HEK293T (cell line): ENCODE measurements at regions of chr3 and their contacts with region 1.

Region 1: DNA sequence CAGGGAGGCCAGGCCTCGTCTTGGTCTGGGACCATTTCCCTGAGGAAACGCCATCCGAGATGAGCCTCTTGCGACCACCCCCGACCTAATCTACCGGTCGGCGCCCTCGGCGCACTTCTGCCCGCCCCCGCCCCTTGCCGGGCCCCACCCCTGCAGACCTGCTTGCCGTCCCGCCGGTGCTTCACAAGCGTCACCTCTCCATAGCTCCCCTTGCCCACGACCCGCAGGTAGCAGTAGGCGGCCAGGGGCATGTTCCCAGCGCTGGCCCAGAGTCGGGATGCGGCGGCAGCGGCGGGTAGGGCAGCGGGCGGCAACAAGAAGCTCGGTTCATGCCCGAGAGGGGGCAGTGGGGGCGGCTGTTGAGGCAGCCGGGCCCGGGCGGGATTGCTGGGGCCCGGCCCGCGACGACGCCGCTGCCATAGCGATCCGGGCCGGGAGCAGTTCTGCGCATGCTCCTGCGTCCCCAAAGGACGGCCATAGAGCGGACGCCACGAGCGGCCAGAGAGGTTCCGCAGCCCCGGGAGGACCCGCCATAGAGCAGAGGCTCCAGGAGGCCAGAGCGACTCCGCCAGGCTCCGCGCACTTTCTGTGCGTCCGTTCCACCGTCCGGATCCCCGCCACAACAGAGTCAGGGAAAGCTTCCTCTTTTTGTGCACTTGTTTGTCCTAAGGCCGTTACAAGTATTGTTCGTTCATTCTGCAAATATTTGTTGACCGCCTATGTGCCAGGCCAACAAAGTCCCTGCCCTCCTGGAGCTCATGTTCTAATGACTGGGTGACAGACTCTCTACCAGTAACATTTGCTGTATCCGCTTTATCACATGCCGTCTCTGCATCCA is at the start of gene NEK4:
- DNase-seq: peak; percentile 97

Region 2: DNA sequence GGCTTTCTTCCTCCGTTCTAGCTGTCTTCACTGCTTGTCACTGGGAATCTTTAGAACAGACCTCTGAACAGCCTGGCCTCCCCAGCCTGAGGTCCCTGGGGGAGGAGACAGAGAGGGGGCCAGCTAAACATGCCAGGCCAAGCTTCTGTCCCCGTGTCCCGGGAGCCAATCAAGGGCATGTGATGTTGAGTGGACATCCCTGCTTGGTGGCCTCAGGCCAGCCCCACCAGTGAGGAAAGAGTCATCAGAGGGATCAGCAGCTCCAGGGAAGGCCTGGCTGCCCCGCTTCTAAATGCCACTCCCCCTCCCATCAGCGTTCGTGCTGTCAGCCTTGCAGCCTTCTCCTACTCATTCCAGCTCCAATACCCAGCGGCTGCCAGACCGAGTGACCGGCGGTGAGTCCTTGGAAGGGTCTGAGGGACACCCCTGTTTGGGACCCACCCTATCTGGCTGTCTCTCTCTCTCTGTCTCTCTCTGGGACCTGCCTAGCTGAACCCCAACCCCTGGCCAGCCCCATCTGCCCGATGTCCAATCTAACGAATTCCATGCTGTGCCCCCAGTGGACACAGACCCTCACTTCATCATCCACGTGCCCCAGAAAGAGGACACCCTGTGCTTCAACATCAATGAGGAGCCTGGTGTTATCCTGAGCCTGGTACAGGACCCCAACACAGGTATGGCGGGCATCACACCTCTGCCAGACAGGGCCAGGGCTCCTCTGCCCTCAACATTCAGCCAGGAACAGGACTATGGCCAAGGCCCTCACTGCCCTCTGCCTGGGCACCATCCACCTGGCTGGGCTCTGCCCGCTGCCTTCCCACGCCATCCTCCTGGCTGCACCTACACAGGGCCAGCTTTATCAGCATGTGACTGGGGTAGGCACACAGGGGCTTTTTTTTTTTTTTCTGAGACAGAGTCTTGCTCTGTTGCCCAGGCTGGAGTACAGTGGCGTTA is 17.2 kb after region 1 on chr3:
- CTCF ChIA-PET with region 1: interaction called, 4 read pairs
- POLR2A ChIA-PET with region 1: interaction called, 35 read pairs
- DNase-seq: no peak

Region 3: DNA sequence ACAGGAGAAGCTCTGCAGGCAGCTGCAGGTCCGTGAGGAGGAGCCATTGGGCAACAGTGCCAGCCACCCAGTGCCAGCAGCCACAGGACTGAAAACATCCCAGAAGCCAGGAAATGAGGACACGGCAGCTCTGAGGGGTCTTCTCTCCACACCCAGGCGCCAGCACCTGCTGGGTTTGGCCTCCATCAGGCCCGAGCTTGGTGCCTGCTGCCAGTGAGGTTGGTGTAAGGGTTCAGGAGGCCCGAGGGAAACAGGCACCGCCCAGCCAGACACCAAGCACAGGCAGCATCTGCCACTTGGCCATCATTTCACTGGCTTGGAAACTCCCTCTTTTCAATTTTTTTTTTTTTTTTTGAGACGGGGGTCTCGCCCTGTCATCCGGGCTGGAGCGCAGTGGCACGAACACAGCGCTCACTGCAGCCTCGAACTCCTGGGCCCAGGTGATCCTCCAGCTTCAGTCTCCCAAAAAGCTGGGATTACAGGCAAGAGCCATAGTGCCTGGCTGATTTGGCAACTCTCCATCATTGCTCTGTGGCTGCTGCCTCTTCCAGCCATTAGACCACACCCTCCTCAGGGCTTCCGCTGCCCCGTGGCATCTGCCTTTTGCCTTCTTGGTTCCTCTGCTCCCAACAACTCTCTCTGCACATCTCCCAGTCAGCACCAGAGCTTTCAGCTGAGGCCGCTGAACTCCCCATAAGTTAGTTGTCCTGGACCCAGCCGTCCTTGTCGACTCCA is 22.4 kb after region 1 on chr3:
- CTCF ChIA-PET with region 1: interaction called, 4 read pairs
- POLR2A ChIA-PET with region 1: interaction called, 17 read pairs
- DNase-seq: no peak

Region 4: GRCh38 chr3:52798978-52799476 is 28.3 kb after region 1 on chr3:
- CTCF ChIA-PET with region 1: no interaction called
- POLR2A ChIA-PET with region 1: interaction called, 12 read pairs
- DNase-seq: peak; percentile 80

Region 5: DNA sequence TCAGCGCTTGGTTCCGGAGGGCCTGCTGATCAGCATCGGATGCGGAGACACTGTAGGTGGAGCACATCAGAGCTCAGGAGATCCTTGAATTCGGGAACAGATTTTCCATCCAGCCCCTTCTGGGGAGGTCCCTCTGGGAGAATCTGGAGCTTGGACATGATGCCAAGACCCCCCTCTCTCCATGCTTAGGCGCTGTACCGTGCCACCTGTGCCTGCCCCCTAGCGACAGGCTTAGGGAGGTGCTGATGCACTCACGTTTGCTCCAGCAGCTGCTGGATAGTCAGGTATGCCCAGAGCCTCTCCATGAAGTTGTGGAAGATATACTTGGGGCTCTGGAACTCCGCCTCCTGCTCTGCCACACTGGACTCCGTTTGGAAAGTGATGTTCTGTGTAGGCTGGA is 50.0 kb after region 1 on chr3:
- CTCF ChIA-PET with region 1: interaction called, 3 read pairs
- POLR2A ChIA-PET with region 1: interaction called, 10 read pairs
- DNase-seq: peak; percentile 78